ENCODE measurements at regions of chr9 and their contacts with region 1.

Region 1: DNA sequence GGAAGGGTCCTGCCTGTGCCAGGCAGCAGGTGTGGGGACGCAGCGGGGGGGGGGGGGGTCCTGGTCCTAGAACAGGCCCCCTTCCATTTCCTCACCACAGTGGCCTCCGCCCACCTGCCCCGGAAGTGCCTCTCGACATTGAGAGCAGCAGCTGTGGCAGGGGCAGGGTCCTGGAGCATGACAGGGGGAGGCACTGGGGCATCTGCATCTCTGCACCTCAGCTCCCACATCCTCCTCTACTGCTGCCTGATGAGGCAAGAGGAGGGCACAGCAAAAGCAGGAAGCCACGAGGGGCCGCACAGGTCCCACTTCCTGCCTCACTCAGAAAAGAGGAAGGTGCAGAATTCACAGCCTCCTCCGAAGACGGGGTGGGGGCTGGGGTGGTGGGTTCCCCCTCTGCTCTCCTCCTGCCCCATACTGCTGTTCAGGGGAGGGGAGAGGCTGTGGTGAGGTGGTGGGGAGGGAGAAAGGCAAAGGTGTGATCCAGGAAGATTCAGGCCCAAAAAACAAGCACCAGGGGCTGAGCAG is 14.8 kb downstream of the AKNA start:
- DNase-seq: peak; percentile 50 to 93 (median 90)
- ATAC-seq: peak; percentile 91
- H3K4me3 ChIP-seq: peak overlapping the region; percentile 51
- H3K4me3 Mint-ChIP-seq: peak overlapping the region; percentile 79 to 98 (median 86)
- H3K27ac ChIP-seq: peak overlapping the region; percentile 70
- H3K27ac Mint-ChIP-seq: peak overlapping the region; percentile 81 to 100 (median 93)
- H3K4me1 ChIP-seq: peaks cover 92% of the 10 kb centered on the region in 2 donors
- H3K4me1 Mint-ChIP-seq: peaks cover 58 to 97% (median 85%) of the 10 kb centered on the region in 7 donors
- H3K27me3 ChIP-seq: no peaks in the 10 kb centered on the region
- H3K27me3 Mint-ChIP-seq: no peaks in the 10 kb centered on the region

Region 2: DNA sequence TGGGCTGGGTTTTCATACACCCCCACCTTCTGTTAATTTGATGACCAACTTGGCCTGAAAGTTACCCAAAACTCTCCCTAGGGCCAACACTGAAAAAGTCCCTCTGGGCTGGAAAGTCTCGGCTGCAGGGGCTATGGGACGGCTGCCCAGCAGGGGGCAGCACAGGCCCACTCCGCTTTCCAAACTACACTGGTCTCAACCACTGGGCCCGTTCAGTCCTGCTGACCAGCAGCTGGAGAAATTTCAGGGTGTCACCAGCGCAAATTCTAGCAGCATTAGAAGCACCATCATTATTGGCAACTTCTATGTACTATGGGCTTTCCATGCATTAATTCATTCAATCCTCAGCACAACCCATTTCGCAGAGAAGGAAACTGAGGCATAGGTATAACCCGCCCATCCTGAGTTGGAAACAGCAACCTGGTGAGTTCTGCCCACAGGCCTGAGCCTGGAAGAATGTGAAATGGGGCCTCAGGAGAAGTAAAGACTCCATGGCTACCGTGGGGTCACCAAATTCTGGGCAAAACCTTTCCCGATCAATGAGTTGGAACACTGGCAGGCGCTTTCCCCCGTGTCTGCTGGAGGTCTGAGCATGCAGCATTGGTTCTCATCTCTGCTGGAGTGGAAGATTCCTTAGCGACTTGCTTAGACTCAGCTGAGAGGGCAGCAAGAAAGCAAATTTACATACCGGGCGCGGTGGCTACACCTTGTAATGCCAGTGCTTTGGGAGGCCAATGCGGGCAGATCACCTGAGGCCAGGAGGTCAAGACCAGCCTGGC is 33.7 kb before region 1 on chr9:
- CTCF ChIA-PET with region 1: no interaction called
- POLR2A ChIA-PET with region 1: interaction called, 978 read pairs
- intact Hi-C with region 1: loop called in 1 of 2 experiments (anchors 1 kb)
- DNase-seq: peak in 8 of 9 donors; percentile 19 to 64 (median 50)
- ATAC-seq: peak; percentile 83
- H3K4me3 ChIP-seq: no peak overlapping the region
- H3K4me3 Mint-ChIP-seq: no peak overlapping the region
- H3K27ac ChIP-seq: peak overlapping the region; percentile 14
- H3K27ac Mint-ChIP-seq: peak overlapping the region in 6 of 9 donors; percentile 15 to 76 (median 67)
- H3K4me1 ChIP-seq: no peaks in the 10 kb centered on the region
- H3K4me1 Mint-ChIP-seq: peaks cover 8 to 37% (median 17%) of the 10 kb centered on the region in 7 donors
- H3K27me3 ChIP-seq: no peaks in the 10 kb centered on the region
- H3K27me3 Mint-ChIP-seq: no peaks in the 10 kb centered on the region

Region 3: GRCh38 chr9:114348906-114349482 is 24.0 kb before region 1 on chr9:
- CTCF ChIA-PET with region 1: interaction called, 3 read pairs
- POLR2A ChIA-PET with region 1: interaction called, 978 read pairs
- intact Hi-C with region 1: loop called in 1 of 2 experiments (anchors 1 kb)
- DNase-seq: peak in 3 of 9 donors; percentile 18 to 83 (median 62)
- ATAC-seq: peak; percentile 85
- H3K4me3 ChIP-seq: no peak overlapping the region
- H3K4me3 Mint-ChIP-seq: peak overlapping the region in 8 of 10 donors; percentile 29 to 65 (median 50)
- H3K27ac ChIP-seq: peak overlapping the region; percentile 70
- H3K27ac Mint-ChIP-seq: peak overlapping the region; percentile 79 to 98 (median 90)
- H3K4me1 ChIP-seq: peaks cover 22 to 24% of the 10 kb centered on the region in 2 donors
- H3K4me1 Mint-ChIP-seq: peaks cover 23 to 60% (median 43%) of the 10 kb centered on the region in 7 donors
- H3K27me3 ChIP-seq: no peaks in the 10 kb centered on the region
- H3K27me3 Mint-ChIP-seq: no peaks in the 10 kb centered on the region